Activated CD4-positive, alpha-beta T cell treated with anti-CD3 and anti-CD28 coated beads for 36 hours (primary cell): ENCODE measurements at regions of chr6 and their contacts with region 1.

Region 1: DNA sequence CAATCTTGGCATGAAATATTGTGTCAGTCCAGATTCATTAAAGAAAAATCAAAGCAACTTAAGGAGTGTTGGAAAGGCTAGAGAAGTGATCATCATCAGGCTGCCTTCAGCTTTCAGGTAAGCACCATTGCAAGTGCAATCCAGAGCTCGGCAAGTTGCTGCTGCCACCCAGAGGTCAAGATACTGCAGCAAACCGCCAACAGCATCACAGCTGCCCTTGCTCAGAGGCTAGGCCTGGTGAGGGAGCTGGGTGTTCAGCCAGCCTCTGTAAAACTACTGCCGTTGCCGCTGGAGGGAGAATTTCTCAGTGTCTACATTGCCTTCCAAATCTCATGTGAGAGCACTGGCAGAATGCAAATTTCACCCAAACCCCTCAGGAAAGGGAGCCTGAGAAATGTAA is 5.8 kb upstream of the SYNE1 start:
- DNase-seq: peak; percentile 57
- ATAC-seq: peak; percentile 69
- H3K4me3 Mint-ChIP-seq: no peak overlapping the region
- H3K27ac Mint-ChIP-seq: no peak overlapping the region
- H3K4me1 Mint-ChIP-seq: no peaks in the 10 kb centered on the region
- H3K27me3 Mint-ChIP-seq: peaks cover 18% of the 10 kb centered on the region

Region 2: GRCh38 chr6:152484806-152485205 is 158.2 kb before region 1 on chr6:
- CTCF ChIA-PET with region 1: interaction called, 3 read pairs
- POLR2A ChIA-PET with region 1: no interaction called
- intact Hi-C with region 1: loop called in 1 of 2 experiments (anchors 1 kb)
- DNase-seq: no peak
- ATAC-seq: no peak
- H3K4me3 Mint-ChIP-seq: no peak overlapping the region
- H3K27ac Mint-ChIP-seq: no peak overlapping the region
- H3K4me1 Mint-ChIP-seq: no peaks in the 10 kb centered on the region
- H3K27me3 Mint-ChIP-seq: no peaks in the 10 kb centered on the region

Region 3: GRCh38 chr6:152552616-152553209 is 90.3 kb before region 1 on chr6:
- CTCF ChIA-PET with region 1: interaction called, 3 read pairs
- POLR2A ChIA-PET with region 1: no interaction called
- intact Hi-C with region 1: loop called in 1 of 2 experiments (anchors 1 kb)
- DNase-seq: peak; percentile 55
- ATAC-seq: peak; percentile 57
- H3K4me3 Mint-ChIP-seq: no peak overlapping the region
- H3K27ac Mint-ChIP-seq: no peak overlapping the region
- H3K4me1 Mint-ChIP-seq: no peaks in the 10 kb centered on the region
- H3K27me3 Mint-ChIP-seq: peaks cover 9% of the 10 kb centered on the region